GM12878 (cell line): ENCODE measurements at regions of chr1 and their contacts with region 1.

Region 1: GRCh38 chr1:232784794-232785193 is 20.4 kb upstream of the MAP10 start:
- DNase-seq: no peak
- ATAC-seq: no peak
- H3K4me3 ChIP-seq: no peak overlapping the region
- H3K27ac ChIP-seq: no peak overlapping the region
- H3K4me1 ChIP-seq: no peaks in the 10 kb centered on the region
- H3K27me3 ChIP-seq: no peaks in the 10 kb centered on the region; a peak in 1 of 4 replicates
- CTCF ChIP-seq: no peak
- EP300 ChIP-seq: no peak
- POLR2A ChIP-seq: no peak
- RAD21 ChIP-seq: no peak

Region 2: DNA sequence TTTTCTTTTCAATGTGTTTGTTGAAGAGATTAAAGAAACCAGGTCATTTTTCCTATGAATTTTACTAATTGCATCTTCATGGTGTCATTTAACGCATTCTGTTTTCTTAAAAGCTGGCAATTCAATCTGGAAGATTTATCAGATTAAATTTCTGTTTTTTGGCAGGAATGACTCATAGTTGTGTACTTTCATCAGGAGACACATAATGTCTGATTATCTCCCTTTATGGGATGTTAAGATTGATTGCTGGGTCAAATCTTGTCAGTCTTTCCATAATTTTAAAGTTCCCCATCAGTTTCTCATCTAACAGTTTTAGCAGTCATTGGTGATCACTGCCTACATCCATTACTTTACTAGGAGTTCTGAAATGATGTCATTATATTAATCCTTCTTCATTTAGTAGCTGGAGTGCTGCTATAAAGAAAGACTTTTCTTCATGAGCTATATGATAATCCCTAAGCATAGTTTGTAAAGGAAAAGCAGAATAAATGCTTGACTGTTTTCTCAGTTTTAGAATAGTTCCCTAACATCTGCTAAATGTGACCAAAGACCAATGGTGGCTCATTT is 52.4 kb before region 1 on chr1:
- CTCF ChIA-PET with region 1: no interaction called
- POLR2A ChIA-PET with region 1: no interaction called
- RAD21 ChIA-PET with region 1: no interaction called
- SMC1A ChIA-PET with region 1: no interaction called
- in situ Hi-C with region 1: loop called (anchors 5 kb)
- intact Hi-C with region 1: no loop called
- DNase-seq: no peak
- ATAC-seq: no peak
- H3K4me3 ChIP-seq: no peak overlapping the region
- H3K27ac ChIP-seq: no peak overlapping the region
- H3K4me1 ChIP-seq: no peaks in the 10 kb centered on the region
- H3K27me3 ChIP-seq: no peaks in the 10 kb centered on the region; a peak in 1 of 4 replicates
- CTCF ChIP-seq: no peak
- EP300 ChIP-seq: no peak
- POLR2A ChIP-seq: no peak
- RAD21 ChIP-seq: no peak

Region 3: GRCh38 chr1:233045588-233045987 is 260.8 kb after region 1 on chr1:
- CTCF ChIA-PET with region 1: no interaction called
- POLR2A ChIA-PET with region 1: no interaction called
- RAD21 ChIA-PET with region 1: no interaction called
- SMC1A ChIA-PET with region 1: no interaction called
- in situ Hi-C with region 1: no loop called
- intact Hi-C with region 1: no loop called
- DNase-seq: no peak
- ATAC-seq: no peak
- H3K4me3 ChIP-seq: no peak overlapping the region
- H3K27ac ChIP-seq: no peak overlapping the region
- H3K4me1 ChIP-seq: no peaks in the 10 kb centered on the region; the same call in 1 of the 2 replicates
- H3K27me3 ChIP-seq: no peaks in the 10 kb centered on the region
- CTCF ChIP-seq: no peak
- EP300 ChIP-seq: no peak
- POLR2A ChIP-seq: no peak
- RAD21 ChIP-seq: no peak